ENCODE measurements at regions of chr11 and their contacts with region 1.

Region 1: DNA sequence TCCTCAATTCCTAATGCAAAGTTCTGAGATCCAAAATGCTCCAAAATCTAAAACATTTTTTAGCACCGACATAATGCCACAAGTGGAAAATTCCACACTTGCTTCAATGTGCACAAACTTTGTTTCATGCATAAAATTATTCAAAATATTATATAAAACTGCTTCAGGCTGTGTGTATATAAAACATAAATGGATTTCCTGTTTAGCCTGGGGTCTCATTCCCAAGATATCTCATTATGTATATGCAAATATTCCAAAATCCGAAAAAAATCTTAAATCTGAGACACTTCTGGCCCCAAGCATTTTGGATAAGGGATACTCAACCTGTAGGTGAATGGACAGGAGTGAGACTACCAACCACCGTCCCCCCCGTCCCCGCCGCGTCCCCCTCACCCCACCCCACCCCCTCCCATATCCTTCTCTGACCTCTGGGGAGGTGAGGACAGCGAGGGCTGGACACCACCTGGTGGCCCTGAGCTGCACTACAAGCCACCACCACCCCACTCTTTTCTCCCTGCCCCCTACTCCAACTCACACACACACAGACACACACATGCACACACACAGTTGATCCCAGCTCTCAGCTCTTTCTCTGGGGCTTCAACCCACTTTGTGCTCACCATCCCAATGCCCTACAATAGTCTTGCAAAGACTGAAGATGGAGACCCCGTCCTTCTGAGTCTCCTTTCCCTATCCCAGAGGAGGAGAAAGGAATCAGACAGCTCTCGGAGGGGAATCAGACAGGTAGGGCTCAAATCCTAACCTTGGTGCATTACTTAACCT is 101.0 kb downstream of the PDE2A start:
- DNase-seq: peak; percentile 73 to 82
- H3K4me3 ChIP-seq: no peak overlapping the region
- H3K4me3 Mint-ChIP-seq: peak overlapping the region; percentile 9
- H3K27ac Mint-ChIP-seq: peak overlapping the region; percentile 88
- H3K4me1 ChIP-seq: peaks cover 63% of the 10 kb centered on the region
- H3K4me1 Mint-ChIP-seq: peaks cover 51% of the 10 kb centered on the region
- H3K27me3 ChIP-seq: no peaks in the 10 kb centered on the region
- H3K27me3 Mint-ChIP-seq: no peaks in the 10 kb centered on the region
- CTCF ChIP-seq: peak; percentile 82 to 94

Region 2: DNA sequence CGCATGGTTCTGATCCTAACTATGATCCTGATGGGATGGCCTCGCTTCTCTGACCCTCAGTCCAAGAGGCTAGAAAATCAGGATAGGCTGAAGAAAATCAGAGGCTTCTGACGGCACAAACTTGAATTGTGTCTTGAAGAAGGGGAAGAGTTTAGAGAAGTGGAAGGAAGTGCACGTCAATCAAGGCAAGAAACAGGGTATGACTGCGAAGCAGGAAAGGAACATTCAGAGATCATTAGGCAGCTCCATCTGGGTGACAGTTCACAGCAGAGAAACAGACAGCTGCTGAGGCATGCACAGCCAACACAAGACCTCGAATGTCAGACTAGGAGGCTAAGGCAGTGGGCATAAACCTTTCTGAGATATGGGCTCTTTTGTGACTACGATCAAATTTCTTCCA is 168.3 kb before region 1 on chr11:
- CTCF ChIA-PET with region 1: no interaction called
- POLR2A ChIA-PET with region 1: no interaction called
- intact Hi-C with region 1: no loop called
- DNase-seq: no peak
- H3K4me3 ChIP-seq: no peak overlapping the region
- H3K4me3 Mint-ChIP-seq: no peak overlapping the region
- H3K27ac Mint-ChIP-seq: no peak overlapping the region
- H3K4me1 ChIP-seq: no peaks in the 10 kb centered on the region
- H3K4me1 Mint-ChIP-seq: no peaks in the 10 kb centered on the region
- H3K27me3 ChIP-seq: no peaks in the 10 kb centered on the region
- H3K27me3 Mint-ChIP-seq: no peaks in the 10 kb centered on the region
- CTCF ChIP-seq: no peak

Region 3: DNA sequence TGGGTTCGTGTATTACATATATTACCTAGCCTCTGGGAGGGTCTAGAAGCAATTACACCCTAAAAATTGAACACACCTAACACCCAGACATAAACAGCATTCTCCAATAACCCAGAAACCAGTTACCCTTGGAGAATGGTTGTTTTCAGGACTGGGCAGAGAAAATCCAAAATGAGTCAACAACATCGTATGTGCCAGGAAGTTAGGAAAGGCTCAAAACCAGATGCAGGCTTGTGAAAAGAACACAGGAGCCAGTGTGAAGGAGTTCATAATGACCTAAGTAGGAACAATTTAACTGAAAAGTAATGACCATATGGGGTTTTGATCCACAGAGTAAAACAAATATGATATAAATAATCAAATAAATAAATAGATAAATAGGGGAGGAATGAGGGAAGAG is 133.8 kb before region 1 on chr11:
- CTCF ChIA-PET with region 1: no interaction called
- POLR2A ChIA-PET with region 1: no interaction called
- intact Hi-C with region 1: no loop called
- DNase-seq: no peak
- H3K4me3 ChIP-seq: no peak overlapping the region
- H3K4me3 Mint-ChIP-seq: no peak overlapping the region
- H3K27ac Mint-ChIP-seq: no peak overlapping the region
- H3K4me1 ChIP-seq: no peaks in the 10 kb centered on the region
- H3K4me1 Mint-ChIP-seq: no peaks in the 10 kb centered on the region
- H3K27me3 ChIP-seq: no peaks in the 10 kb centered on the region
- H3K27me3 Mint-ChIP-seq: peaks cover 10% of the 10 kb centered on the region
- CTCF ChIP-seq: no peak

Region 4: DNA sequence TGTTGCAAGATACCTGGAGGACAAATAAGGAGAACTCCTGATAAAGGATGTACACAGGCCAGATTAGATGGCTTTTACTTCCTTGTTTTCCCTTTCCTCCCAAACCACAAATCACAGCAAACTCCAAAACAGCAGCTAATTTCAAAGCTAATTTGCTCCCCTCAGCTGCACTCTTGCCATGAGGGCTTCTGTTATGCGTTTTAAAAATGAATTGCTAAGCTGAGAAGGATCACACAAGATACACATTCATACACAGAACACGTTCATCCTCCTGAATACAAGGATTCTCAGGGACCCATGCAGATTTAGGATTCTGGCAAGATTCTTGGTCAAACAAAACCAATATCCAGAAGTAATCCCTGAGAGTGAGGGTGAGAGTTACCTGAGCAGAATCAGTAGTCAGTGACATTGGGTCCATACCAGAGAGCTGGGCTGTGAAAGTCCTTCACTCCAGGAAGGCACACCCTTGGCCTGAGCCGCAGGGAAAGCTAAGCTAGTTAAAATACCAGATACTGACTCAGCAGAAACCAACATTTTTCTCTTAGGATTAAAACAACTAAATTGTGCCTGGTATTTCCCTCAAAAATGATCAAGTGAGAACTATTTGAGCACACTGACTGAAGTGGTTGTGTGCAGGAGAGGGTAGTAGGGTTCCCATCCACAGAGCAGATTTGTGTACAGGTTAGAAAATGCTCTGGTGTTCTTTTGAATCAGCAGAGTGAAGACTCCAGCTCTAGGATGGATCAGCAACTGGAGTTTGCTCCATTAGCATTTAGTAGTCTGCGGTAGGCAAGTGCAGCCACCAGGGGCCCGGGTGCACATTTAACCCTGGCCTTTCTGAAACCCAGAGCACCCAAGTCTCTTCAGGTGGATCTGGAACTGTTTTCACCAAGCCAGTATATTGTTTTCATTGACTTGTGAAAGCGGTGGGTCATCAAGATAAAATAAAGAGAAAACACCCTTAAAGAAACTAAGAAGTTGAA is 38.4 kb before region 1 on chr11:
- CTCF ChIA-PET with region 1: interaction called, 9 read pairs
- POLR2A ChIA-PET with region 1: no interaction called
- intact Hi-C with region 1: loop called (anchors 1 kb)
- DNase-seq: peak; percentile 47 to 50
- H3K4me3 ChIP-seq: no peak overlapping the region
- H3K4me3 Mint-ChIP-seq: no peak overlapping the region
- H3K27ac Mint-ChIP-seq: no peak overlapping the region
- H3K4me1 ChIP-seq: peaks cover 15% of the 10 kb centered on the region
- H3K4me1 Mint-ChIP-seq: peaks cover 17% of the 10 kb centered on the region
- H3K27me3 ChIP-seq: no peaks in the 10 kb centered on the region; the same call in 1 of the 2 replicates
- H3K27me3 Mint-ChIP-seq: peaks cover 13% of the 10 kb centered on the region
- CTCF ChIP-seq: peak; percentile 33 to 36

Region 5: GRCh38 chr11:72585762-72586311 is 12.6 kb after region 1 on chr11:
- CTCF ChIA-PET with region 1: interaction called, 10 read pairs
- POLR2A ChIA-PET with region 1: no interaction called
- intact Hi-C with region 1: no loop called
- DNase-seq: peak; percentile 75 to 86
- H3K4me3 ChIP-seq: no peak overlapping the region
- H3K4me3 Mint-ChIP-seq: no peak overlapping the region
- H3K27ac Mint-ChIP-seq: no peak overlapping the region
- H3K4me1 ChIP-seq: no peaks in the 10 kb centered on the region
- H3K4me1 Mint-ChIP-seq: no peaks in the 10 kb centered on the region
- H3K27me3 ChIP-seq: peaks cover under 1% of the 10 kb centered on the region; the same call in 1 of the 2 replicates
- H3K27me3 Mint-ChIP-seq: peaks cover 7% of the 10 kb centered on the region
- CTCF ChIP-seq: peak; percentile 97 to 98

Region 6: GRCh38 chr11:72831513-72832300 is 258.4 kb after region 1 on chr11:
- CTCF ChIA-PET with region 1: no interaction called
- POLR2A ChIA-PET with region 1: no interaction called
- intact Hi-C with region 1: no loop called
- DNase-seq: peak; percentile 89 to 93
- H3K4me3 ChIP-seq: no peak overlapping the region
- H3K4me3 Mint-ChIP-seq: no peak overlapping the region
- H3K27ac Mint-ChIP-seq: peak overlapping the region; percentile 58
- H3K4me1 ChIP-seq: peaks cover 10% of the 10 kb centered on the region
- H3K4me1 Mint-ChIP-seq: peaks cover 24% of the 10 kb centered on the region
- H3K27me3 ChIP-seq: no peaks in the 10 kb centered on the region
- H3K27me3 Mint-ChIP-seq: no peaks in the 10 kb centered on the region
- CTCF ChIP-seq: peak; percentile 98 to 99